ENCODE measurements at regions of chr18 and their contacts with region 1.

Region 1: DNA sequence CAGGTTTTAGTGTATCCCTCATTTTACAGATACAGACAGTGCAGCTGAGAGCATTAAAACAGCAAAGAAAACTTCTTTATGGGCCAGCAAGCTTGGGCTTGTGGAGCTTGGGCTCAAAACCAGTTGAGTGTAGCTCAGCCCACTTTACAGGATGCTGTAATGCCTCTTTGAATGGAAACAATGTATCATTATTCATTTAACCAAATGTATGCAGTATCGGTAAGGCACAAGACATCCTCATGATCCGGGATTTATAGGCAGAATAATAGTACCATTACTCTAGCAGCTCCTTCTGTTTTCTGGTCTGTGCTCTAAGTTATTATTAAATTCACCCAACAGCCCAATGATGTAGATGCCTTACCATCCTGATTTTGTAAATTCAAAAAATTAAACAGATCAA is 575.1 kb upstream of the CDH7 start:
- DNase-seq: no peak
- H3K4me3 ChIP-seq: no peak overlapping the region
- CTCF ChIP-seq: no peak
- POLR2A ChIP-seq: no peak

Region 2: DNA sequence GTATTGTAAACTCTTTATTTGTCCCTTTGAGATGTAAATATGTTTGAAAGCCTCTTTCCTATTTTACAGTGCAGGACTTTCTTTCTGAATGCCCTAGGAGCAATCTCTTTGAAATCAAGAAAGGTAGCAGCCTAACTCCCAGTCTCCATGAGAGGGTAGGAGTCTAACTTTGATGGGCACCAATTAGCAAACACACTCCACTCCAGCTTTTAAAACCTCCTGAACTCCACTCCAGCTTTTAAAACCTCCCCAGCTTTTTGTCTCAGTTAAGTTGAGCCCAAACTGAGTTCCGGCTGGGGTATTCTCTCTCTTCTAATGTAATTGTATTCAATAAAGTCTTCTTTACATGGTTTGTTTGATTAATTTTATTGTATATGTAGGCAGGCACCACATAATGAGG is 81.5 kb after region 1 on chr18:
- intact Hi-C with region 1: loop called (anchors 5 kb)
- DNase-seq: no peak
- H3K4me3 ChIP-seq: no peak overlapping the region
- CTCF ChIP-seq: no peak
- POLR2A ChIP-seq: no peak

Measured in lower leg skin (tissue), 4 donors.